ENCODE measurements at regions of chr22 and their contacts with region 1.

Region 1: GRCh38 chr22:40922484-40923303 is 28.5 kb upstream of the RBX1 start:
- DNase-seq: peak; percentile 83
- H3K4me3 ChIP-seq: no peak overlapping the region
- H3K27ac ChIP-seq: peak overlapping the region; percentile 14
- H3K4me1 ChIP-seq: peaks cover 3% of the 10 kb centered on the region
- H3K27me3 ChIP-seq: no peaks in the 10 kb centered on the region
- CTCF ChIP-seq: peak; percentile 39 to 43
- POLR2A ChIP-seq: no peak

Region 2: DNA sequence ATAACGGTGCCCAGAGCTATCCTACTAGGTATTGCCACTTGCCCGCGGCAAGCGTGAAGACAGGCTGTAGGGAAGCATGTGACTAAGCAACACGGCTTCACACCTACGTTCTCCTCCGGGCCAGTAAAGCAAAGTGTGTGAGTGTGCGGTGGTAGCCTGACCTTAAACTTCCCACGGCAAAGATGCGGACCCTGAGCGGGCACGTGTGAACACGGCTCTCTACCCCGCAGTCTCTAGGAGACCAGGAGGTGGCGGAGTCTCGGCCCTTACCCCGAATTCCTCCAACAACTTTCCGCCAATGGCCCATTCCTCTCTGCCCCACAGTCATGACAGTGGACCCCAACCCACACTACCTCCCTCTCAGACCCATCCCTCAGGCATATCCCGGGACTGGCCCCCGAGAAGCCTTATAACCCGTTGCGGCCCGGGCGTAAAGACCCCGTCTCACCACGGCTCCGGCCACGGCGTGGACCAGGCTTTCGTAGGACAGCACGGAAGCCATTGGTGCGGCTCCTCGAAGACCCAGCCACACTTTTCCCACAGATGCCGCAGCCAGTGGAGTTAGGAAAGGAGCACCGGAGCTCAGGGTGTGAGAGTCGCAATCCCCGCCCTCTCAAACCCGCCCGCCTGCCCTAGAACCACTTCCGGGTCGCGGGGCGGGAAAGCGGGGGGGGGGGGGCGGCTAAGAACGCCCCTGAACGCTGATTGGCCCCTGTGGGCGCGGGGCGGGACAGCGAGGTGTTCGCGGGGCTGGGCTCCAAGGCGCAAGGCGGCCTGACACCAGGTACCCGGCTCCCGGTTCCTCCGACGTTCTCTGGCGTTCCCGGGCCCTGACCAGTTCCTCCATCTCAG is 103.7 kb before region 1 on chr22 and contains the start of gene SLC25A17:
- CTCF ChIA-PET with region 1: no interaction called
- POLR2A ChIA-PET with region 1: no interaction called
- dilution Hi-C with region 1: no loop called
- intact Hi-C with region 1: no loop called
- DNase-seq: peak; percentile 87
- H3K4me3 ChIP-seq: peak within 1 kb of the TSS; percentile 80 to 95 (median 83)
- H3K27ac ChIP-seq: peak within 1 kb of the TSS; percentile 46
- H3K4me1 ChIP-seq: peaks cover 15% of the 10 kb centered on the region
- H3K27me3 ChIP-seq: no peaks in the 10 kb centered on the region
- CTCF ChIP-seq: peak; percentile 34 to 61
- POLR2A ChIP-seq: peak; percentile 69
- total RNA-seq, gene SLC25A17: 24.9 and 25.8 TPM in 2 replicates

Region 3: DNA sequence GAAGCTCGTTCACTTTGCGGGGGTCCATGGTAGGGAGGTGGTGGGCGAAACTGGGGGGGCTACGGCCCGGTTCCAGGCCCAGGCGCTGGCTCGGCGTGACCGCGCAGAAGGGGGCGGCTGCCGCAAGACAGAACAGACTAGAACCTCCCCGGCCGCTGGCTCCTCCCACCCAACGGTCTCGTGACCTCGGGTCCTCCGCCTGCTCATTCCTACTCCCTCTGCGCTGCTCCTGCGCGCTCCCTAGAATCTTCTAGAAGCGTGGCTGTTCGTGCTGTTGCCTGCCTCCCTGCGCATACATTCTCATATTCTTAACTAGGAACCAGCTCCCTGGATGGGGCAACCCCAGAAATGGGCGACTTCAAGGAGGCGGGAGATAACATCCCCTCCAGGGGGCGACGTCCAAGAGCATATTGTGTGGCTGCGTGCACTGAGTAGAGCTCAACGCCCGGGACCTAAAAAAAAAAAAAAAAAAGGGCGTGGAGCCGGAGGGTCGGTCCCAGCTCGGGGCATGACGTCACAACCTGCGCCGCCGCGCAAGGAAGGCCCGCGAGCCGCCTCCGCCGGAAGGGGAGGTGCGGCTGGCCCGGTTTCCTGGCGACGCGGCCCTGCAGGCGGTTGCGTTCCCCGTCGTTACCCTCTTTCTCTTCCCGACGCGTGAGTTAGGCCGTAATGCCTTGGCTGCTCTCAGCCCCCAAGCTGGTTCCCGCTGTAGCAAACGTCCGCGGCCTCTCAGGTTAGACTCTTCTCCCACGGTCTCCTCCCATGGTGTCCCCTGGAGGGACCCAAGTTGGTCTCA is 66.0 kb before region 1 on chr22 and contains the starts of genes ST13 and XPNPEP3:
- CTCF ChIA-PET with region 1: interaction called, 4 read pairs
- POLR2A ChIA-PET with region 1: interaction called, 11 read pairs
- dilution Hi-C with region 1: no loop called
- intact Hi-C with region 1: no loop called
- DNase-seq: peak; percentile 95
- H3K4me3 ChIP-seq: peak within 1 kb of the TSS; percentile 80 to 99 (median 94)
- H3K27ac ChIP-seq: peak within 1 kb of the TSS; percentile 93
- H3K4me1 ChIP-seq: peaks cover 27% of the 10 kb centered on the region
- H3K27me3 ChIP-seq: no peaks in the 10 kb centered on the region
- CTCF ChIP-seq: peak in 1 of 2 donors; percentile 27
- POLR2A ChIP-seq: peak; percentile 76
- total RNA-seq, gene ST13: 249 and 250 TPM in 2 replicates
- total RNA-seq, gene XPNPEP3: 21.2 TPM in 2 replicates

Region 4: DNA sequence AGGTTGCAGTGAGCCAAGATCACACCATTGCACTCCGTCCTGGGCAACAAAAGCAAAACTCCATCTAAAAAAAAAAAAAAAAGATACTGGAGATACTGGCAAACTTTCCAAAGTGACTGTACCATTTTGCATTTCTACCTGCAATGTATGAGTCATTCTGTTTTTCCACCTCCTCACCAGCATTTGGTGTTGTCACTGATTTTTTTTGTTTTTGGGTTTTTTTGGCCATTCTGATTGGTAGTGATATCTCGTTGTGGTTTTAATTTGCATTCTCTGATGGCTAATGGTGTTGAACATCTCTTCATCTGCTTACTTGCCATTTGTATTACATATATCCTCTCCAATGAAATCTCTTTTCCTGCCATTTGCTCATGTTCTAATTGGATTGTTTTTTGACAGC is 16.5 kb after region 1 on chr22:
- CTCF ChIA-PET with region 1: interaction called, 21 read pairs
- POLR2A ChIA-PET with region 1: no interaction called
- dilution Hi-C with region 1: no loop called
- intact Hi-C with region 1: no loop called
- DNase-seq: no peak
- H3K4me3 ChIP-seq: no peak overlapping the region
- H3K27ac ChIP-seq: no peak overlapping the region
- H3K4me1 ChIP-seq: no peaks in the 10 kb centered on the region
- H3K27me3 ChIP-seq: no peaks in the 10 kb centered on the region
- CTCF ChIP-seq: no peak
- POLR2A ChIP-seq: no peak

Region 5: GRCh38 chr22:41091132-41092022 is 168.7 kb after region 1 on chr22:
- CTCF ChIA-PET with region 1: interaction called, 59 read pairs
- POLR2A ChIA-PET with region 1: no interaction called
- dilution Hi-C with region 1: no loop called
- intact Hi-C with region 1: loop called (anchors 1 kb)
- DNase-seq: peak; percentile 99
- H3K4me3 ChIP-seq: peak overlapping the region; percentile 99 to 100 (median 100)
- H3K27ac ChIP-seq: peak overlapping the region; percentile 98
- H3K4me1 ChIP-seq: peaks cover 25% of the 10 kb centered on the region
- H3K27me3 ChIP-seq: no peaks in the 10 kb centered on the region
- CTCF ChIP-seq: no peak
- POLR2A ChIP-seq: peak; percentile 74

Region 6: GRCh38 chr22:41140365-41140957 is 217.8 kb after region 1 on chr22:
- CTCF ChIA-PET with region 1: interaction called, 25 read pairs
- POLR2A ChIA-PET with region 1: no interaction called
- dilution Hi-C with region 1: no loop called
- intact Hi-C with region 1: no loop called
- DNase-seq: no peak
- H3K4me3 ChIP-seq: no peak overlapping the region
- H3K27ac ChIP-seq: no peak overlapping the region
- H3K4me1 ChIP-seq: no peaks in the 10 kb centered on the region
- H3K27me3 ChIP-seq: no peaks in the 10 kb centered on the region
- CTCF ChIP-seq: no peak
- POLR2A ChIP-seq: no peak

Region 7: GRCh38 chr22:41237707-41238569 is 315.2 kb after region 1 on chr22:
- CTCF ChIA-PET with region 1: interaction called, 43 read pairs
- POLR2A ChIA-PET with region 1: no interaction called
- dilution Hi-C with region 1: no loop called
- intact Hi-C with region 1: loop called (anchors 10 kb)
- DNase-seq: peak; percentile 31
- H3K4me3 ChIP-seq: peak overlapping the region in 1 of 3 experiments; percentile 5
- H3K27ac ChIP-seq: no peak overlapping the region
- H3K4me1 ChIP-seq: peaks cover 6% of the 10 kb centered on the region
- H3K27me3 ChIP-seq: no peaks in the 10 kb centered on the region
- CTCF ChIP-seq: peak; percentile 28 to 58
- POLR2A ChIP-seq: peak; percentile 56